Posterior cingulate gyrus (tissue), 11 donors: ENCODE measurements at regions of chr15 and their contacts with region 1.

Region 1: DNA sequence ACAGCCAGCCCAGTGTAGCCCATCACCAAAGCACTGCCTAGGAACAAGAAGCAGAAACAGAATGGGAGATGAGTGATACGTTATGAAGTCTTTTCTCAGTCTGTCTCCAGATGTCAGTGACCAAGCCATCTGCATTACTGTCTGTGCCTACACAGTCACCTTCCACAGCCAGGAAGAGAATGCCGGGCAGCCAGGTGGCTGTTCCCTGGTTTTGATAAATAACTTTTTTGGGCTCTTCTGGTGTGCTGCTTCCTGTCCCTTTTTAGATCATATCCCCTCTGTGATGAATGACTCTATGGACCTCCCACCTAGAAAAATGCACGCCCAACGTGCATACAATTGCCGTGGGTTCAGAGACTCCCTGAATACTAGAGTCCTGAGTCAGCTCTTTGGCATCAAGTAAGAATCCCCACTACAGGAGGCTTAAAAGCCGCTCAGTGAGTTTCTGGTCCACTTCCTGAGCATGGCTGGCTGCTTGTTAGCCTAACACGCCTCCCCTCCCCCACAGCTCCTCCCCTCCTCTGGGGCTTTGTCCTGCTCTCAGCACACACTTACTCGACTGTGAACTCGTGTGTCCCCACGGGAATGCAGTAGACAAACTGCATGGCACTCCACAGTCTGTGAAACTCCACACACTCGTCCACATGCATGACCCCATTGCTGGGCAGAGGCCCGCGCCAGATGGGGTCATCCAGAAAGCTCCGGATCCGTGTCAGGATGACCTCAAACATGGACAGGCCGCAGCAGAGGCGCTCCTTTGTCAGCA is 34.7 kb downstream of the NIPA2 start:
- DNase-seq: peak in 1 of 10 donors; percentile 78

Region 2: GRCh38 chr15:22780267-22780666 is 92.9 kb before region 1 on chr15:
- intact Hi-C with region 1: no loop called
- DNase-seq: no peak

Region 3: DNA sequence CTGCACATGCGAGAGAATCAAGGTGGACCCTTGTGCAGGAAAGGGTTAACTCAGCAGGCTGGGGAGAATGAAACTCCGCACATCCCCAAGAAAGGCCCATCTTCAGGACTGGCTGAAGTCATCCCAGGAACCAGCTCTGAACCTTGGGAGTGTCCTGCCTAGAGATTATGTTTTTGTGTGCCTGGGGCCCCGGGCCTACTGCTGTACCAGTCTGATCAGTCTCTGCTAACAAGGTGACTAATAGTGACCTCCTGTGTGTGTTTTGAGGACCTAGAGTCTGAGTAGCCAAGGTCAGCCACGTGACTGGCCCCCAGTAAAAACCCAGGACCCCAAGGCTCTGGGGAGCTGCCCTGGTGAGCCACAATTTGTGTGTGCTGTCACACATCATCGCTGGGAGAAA is 48.9 kb after region 1 on chr15:
- intact Hi-C with region 1: loop called (anchors 10 kb)
- DNase-seq: peak in 1 of 10 donors; percentile 34